Naive thymus-derived CD4-positive, alpha-beta T cell (primary cell): ENCODE measurements at regions of chr11 and their contacts with region 1.

Region 1: DNA sequence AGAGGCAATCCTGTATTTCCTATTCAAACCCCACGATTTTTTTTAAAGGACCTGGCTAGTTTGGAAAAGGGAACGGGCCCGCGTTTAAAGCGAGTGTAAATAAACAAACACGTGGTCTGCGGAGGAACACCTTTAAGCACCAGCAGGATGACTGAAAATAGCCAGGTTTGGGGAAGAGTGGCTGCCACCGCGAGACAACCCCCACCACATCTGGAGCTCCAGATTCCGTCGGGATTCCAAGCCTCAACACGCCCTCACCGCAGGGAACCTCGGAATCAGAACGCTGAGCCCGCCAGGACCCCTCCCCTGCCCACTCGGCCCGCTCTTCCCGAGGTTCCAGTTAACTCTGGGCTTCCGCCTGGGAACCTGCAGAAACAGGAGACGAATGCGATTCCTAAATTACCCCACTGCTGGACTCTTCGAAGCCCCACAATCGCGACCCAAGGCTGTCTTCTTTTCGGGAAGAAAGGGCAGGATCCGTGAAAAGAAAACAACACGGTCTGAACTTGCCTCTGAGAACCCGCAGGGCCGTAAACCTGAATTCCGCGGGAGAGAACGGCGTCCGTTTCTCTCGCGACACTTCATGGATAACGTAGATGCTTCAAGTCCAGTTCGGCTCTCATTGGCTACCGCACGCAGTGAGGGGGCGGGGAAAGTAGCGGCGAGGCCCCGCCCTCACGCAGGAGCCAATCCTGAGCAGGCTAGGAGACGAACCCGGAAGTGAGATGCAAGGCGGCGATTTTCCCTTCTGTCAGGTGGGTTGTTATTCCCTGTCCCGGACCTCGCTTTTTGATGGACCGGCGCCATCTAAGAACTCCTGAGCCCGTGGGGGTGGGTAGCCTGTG is at the starts of genes ANKRD49 and MRE11:
- DNase-seq: peak; percentile 92 to 98 (median 97)
- ATAC-seq: peak; percentile 100
- H3K4me3 ChIP-seq: peak within 1 kb of the TSS; percentile 94
- H3K4me3 Mint-ChIP-seq: peak within 1 kb of the TSS; percentile 92 to 99 (median 96)
- H3K27ac ChIP-seq: peak within 1 kb of the TSS; percentile 93
- H3K27ac Mint-ChIP-seq: peak within 1 kb of the TSS; percentile 91 to 99 (median 97)
- H3K4me1 ChIP-seq: peaks cover 18 to 28% of the 10 kb centered on the region in 2 donors
- H3K4me1 Mint-ChIP-seq: peaks cover 31 to 64% (median 42%) of the 10 kb centered on the region in 7 donors
- H3K27me3 ChIP-seq: no peaks in the 10 kb centered on the region
- H3K27me3 Mint-ChIP-seq: no peaks in the 10 kb centered on the region
- total RNA-seq, gene ANKRD49: 25.6 to 64.4 (median 44.5) TPM
- total RNA-seq, gene MRE11: 19.0 to 45.5 (median 40.1) TPM

Region 2: GRCh38 chr11:93543292-93543977 is 950.1 kb before region 1 on chr11 and contains the start of gene SMCO4:
- CTCF ChIA-PET with region 1: no interaction called
- POLR2A ChIA-PET with region 1: no interaction called
- intact Hi-C with region 1: loop called in 1 of 2 experiments (anchors 5 kb)
- DNase-seq: peak; percentile 17 to 82 (median 40)
- ATAC-seq: peak; percentile 83
- H3K4me3 ChIP-seq: peak within 1 kb of the TSS; percentile 48
- H3K4me3 Mint-ChIP-seq: peak within 1 kb of the TSS; percentile 88 to 95 (median 92)
- H3K27ac ChIP-seq: peak within 1 kb of the TSS; percentile 33
- H3K27ac Mint-ChIP-seq: peak within 1 kb of the TSS in 7 of 9 donors; percentile 9 to 87 (median 52)
- H3K4me1 ChIP-seq: no peaks in the 10 kb centered on the region
- H3K4me1 Mint-ChIP-seq: peaks cover 6 to 39% (median 21%) of the 10 kb centered on the region in 7 donors
- H3K27me3 ChIP-seq: no peaks in the 10 kb centered on the region
- H3K27me3 Mint-ChIP-seq: peaks cover 0 to 16% (median 4%) of the 10 kb centered on the region in 5 donors
- total RNA-seq, gene SMCO4: 2.9 to 34.7 (median 5.9) TPM

Region 3: DNA sequence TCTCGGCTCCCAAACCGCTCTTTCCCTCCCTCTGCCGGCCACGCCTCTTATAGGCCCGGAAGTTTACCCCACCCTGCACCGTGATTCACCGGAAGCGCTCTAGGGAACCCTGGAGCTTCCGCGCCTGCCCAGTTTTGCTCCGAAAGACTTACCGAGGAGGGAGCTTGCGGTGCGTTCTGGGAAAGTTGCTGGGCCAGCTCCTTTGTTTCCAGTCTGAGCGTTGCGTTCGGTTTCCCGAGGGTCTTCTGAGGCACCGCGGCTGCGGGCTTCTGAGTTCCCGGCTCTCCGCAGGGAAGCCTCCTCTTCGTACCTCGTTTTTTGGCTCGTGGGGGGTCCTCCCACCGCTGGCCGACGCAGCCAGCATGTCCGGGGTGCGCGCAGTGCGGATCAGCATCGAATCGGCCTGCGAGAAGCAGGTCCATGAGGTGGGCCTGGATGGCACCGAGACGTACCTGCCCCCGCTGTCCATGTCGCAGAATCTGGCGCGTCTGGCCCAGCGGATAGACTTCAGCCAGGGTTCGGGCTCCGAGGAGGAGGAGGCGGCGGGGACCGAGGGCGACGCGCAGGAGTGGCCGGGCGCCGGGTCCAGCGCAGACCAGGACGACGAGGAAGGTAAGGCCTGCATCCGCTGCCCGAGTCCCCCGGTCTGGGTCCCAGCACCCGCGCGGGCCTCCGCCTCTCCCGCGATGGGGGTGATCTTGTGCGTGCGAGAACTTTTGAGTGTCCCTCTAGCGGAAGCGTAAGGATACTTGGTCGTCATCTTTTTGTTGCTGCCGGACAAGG is 709.2 kb before region 1 on chr11 and contains the start of gene MED17:
- CTCF ChIA-PET with region 1: no interaction called
- POLR2A ChIA-PET with region 1: no interaction called
- intact Hi-C with region 1: loop called (anchors 1 to 5 kb)
- DNase-seq: peak; percentile 64 to 87 (median 85)
- ATAC-seq: peak; percentile 97
- H3K4me3 ChIP-seq: peak within 1 kb of the TSS; percentile 77
- H3K4me3 Mint-ChIP-seq: peak within 1 kb of the TSS; percentile 93 to 100 (median 96)
- H3K27ac ChIP-seq: peak within 1 kb of the TSS; percentile 94
- H3K27ac Mint-ChIP-seq: peak within 1 kb of the TSS; percentile 81 to 97 (median 93)
- H3K4me1 ChIP-seq: peaks cover 22 to 37% of the 10 kb centered on the region in 2 donors
- H3K4me1 Mint-ChIP-seq: peaks cover 34 to 58% (median 48%) of the 10 kb centered on the region in 7 donors
- H3K27me3 ChIP-seq: no peaks in the 10 kb centered on the region
- H3K27me3 Mint-ChIP-seq: no peaks in the 10 kb centered on the region
- total RNA-seq, gene MED17: 47.7 to 75.9 (median 65.6) TPM

Region 4: DNA sequence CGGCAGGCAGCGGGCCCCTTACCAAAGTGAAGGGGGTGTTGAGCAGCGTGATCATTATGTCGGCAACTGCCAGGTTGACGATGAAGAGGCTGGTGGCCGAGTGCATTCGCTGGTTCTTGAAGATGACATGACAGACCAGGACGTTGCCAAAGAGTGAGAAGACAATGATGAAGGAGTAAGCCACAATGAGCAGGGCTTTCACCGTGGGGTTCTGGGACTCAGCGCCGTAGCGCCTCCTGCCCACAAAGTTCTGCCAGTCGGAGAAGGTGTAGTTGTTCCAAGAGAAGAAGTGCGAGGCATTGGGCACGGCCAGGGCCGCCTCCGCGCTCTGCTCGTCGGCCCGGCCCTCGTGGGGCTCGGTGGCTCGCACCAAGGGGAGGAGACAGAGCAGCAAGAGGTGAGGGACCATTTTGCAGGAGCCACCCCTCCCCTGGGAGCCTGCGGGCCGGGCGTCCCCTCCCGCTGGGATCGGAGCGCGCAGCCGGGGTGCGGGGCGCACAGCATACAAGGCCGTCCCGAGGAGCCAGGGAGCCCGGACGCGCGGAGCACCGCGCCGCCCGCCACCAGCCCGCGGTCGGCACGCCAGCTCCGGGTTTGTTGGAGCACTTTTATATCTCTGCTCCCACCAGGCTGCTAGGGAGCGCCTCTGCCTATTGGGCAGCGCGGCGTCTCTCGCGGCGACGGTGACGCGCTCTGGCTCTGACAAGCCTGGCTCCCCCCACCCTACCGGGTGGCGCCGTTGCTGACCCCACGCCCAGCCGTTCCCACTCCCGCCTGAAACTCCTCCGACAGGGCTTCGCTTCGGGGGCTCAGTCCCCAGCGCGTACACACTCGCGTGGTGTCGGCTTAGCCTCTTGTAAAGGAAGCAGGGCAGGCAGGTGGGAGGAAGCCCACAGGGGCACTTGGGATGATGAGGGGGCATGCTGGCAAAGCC is 92.4 kb before region 1 on chr11 and contains the start of gene GPR83:
- CTCF ChIA-PET with region 1: no interaction called
- POLR2A ChIA-PET with region 1: no interaction called
- intact Hi-C with region 1: no loop called
- DNase-seq: no peak
- ATAC-seq: no peak
- H3K4me3 ChIP-seq: no peak within 1 kb of the TSS
- H3K4me3 Mint-ChIP-seq: peak within 1 kb of the TSS in 7 of 10 donors; percentile 12 to 56 (median 36)
- H3K27ac ChIP-seq: no peak within 1 kb of the TSS
- H3K27ac Mint-ChIP-seq: peak within 1 kb of the TSS in 1 of 9 donors; percentile 4
- H3K4me1 ChIP-seq: no peaks in the 10 kb centered on the region
- H3K4me1 Mint-ChIP-seq: peaks cover 6 to 14% (median 11%) of the 10 kb centered on the region in 7 donors
- H3K27me3 ChIP-seq: no peaks in the 10 kb centered on the region
- H3K27me3 Mint-ChIP-seq: peaks cover 42 to 56% (median 50%) of the 10 kb centered on the region in 5 donors
- total RNA-seq, gene GPR83: 0.05 to 0.27 (median 0.12) TPM in 3 of 5 experiments, not detected in the others

Region 5: GRCh38 chr11:94504689-94505293 is 11.3 kb after region 1 on chr11:
- CTCF ChIA-PET with region 1: interaction called, 4 read pairs
- POLR2A ChIA-PET with region 1: interaction called, 6 read pairs
- intact Hi-C with region 1: loop called in 1 of 2 experiments (anchors 1 kb)
- DNase-seq: peak in 7 of 9 donors; percentile 15 to 54 (median 47)
- ATAC-seq: peak; percentile 70
- H3K4me3 ChIP-seq: no peak overlapping the region
- H3K4me3 Mint-ChIP-seq: no peak overlapping the region
- H3K27ac ChIP-seq: no peak overlapping the region
- H3K27ac Mint-ChIP-seq: no peak overlapping the region
- H3K4me1 ChIP-seq: no peaks in the 10 kb centered on the region
- H3K4me1 Mint-ChIP-seq: peaks cover 0 to 4% (median 0%) of the 10 kb centered on the region in 7 donors
- H3K27me3 ChIP-seq: peaks cover 0 to 3% of the 10 kb centered on the region in 2 donors
- H3K27me3 Mint-ChIP-seq: peaks cover 0 to 21% (median 3%) of the 10 kb centered on the region in 5 donors

Region 6: GRCh38 chr11:95089620-95090542 is 596.4 kb after region 1 on chr11 and contains the start of gene ENDOD1:
- CTCF ChIA-PET with region 1: no interaction called
- POLR2A ChIA-PET with region 1: no interaction called
- intact Hi-C with region 1: loop called in 1 of 2 experiments (anchors 1 kb)
- DNase-seq: peak; percentile 81 to 89 (median 87)
- ATAC-seq: peak; percentile 98
- H3K4me3 ChIP-seq: peak within 1 kb of the TSS; percentile 79
- H3K4me3 Mint-ChIP-seq: peak within 1 kb of the TSS; percentile 86 to 95 (median 92)
- H3K27ac ChIP-seq: peak within 1 kb of the TSS; percentile 87
- H3K27ac Mint-ChIP-seq: peak within 1 kb of the TSS; percentile 96 to 99 (median 98)
- H3K4me1 ChIP-seq: peaks cover 16 to 31% of the 10 kb centered on the region in 2 donors
- H3K4me1 Mint-ChIP-seq: peaks cover 24 to 61% (median 49%) of the 10 kb centered on the region in 7 donors
- H3K27me3 ChIP-seq: no peaks in the 10 kb centered on the region
- H3K27me3 Mint-ChIP-seq: no peaks in the 10 kb centered on the region
- total RNA-seq, gene ENDOD1: 4.7 to 23.2 (median 8.6) TPM